CD4-positive, alpha-beta T cell (primary cell): ENCODE measurements at regions of chr19 and their contacts with region 1.

Region 1: GRCh38 chr19:49929611-49930482 is 543 bp upstream of the NUP62 start:
- DNase-seq: peak; percentile 82 to 98 (median 90)
- ATAC-seq: peak; percentile 87
- H3K4me3 ChIP-seq: peak overlapping the region; percentile 89
- H3K4me3 Mint-ChIP-seq: peak overlapping the region; percentile 99
- H3K27ac ChIP-seq: peak overlapping the region; percentile 90 to 93
- H3K27ac Mint-ChIP-seq: peak overlapping the region; percentile 96
- H3K4me1 ChIP-seq: peaks cover 73% of the 10 kb centered on the region
- H3K4me1 Mint-ChIP-seq: peaks cover 66% of the 10 kb centered on the region
- H3K27me3 ChIP-seq: no peaks in the 10 kb centered on the region
- H3K27me3 Mint-ChIP-seq: peaks cover 5% of the 10 kb centered on the region
- CTCF ChIP-seq: no peak

Region 2: GRCh38 chr19:48468775-48469288 is 1461.0 kb before region 1 on chr19:
- CTCF ChIA-PET with region 1: no interaction called
- POLR2A ChIA-PET with region 1: no interaction called
- intact Hi-C with region 1: no loop called
- DNase-seq: peak; percentile 98 to 100 (median 99)
- ATAC-seq: peak; percentile 89
- H3K4me3 ChIP-seq: peak overlapping the region; percentile 96
- H3K4me3 Mint-ChIP-seq: peak overlapping the region; percentile 90
- H3K27ac ChIP-seq: peak overlapping the region; percentile 25 to 79
- H3K27ac Mint-ChIP-seq: peak overlapping the region; percentile 82
- H3K4me1 ChIP-seq: peaks cover 22% of the 10 kb centered on the region
- H3K4me1 Mint-ChIP-seq: peaks cover 21% of the 10 kb centered on the region
- H3K27me3 ChIP-seq: no peaks in the 10 kb centered on the region
- H3K27me3 Mint-ChIP-seq: no peaks in the 10 kb centered on the region
- CTCF ChIP-seq: no peak

Region 3: GRCh38 chr19:49766007-49766937 is 163.6 kb before region 1 on chr19:
- CTCF ChIA-PET with region 1: no interaction called
- POLR2A ChIA-PET with region 1: interaction called, 6 read pairs
- intact Hi-C with region 1: loop called in 1 of 2 experiments (anchors 1 kb)
- DNase-seq: peak; percentile 98 to 100 (median 99)
- ATAC-seq: peak; percentile 86
- H3K4me3 ChIP-seq: peak overlapping the region; percentile 91
- H3K4me3 Mint-ChIP-seq: peak overlapping the region; percentile 94
- H3K27ac ChIP-seq: peak overlapping the region in 1 of 2 donors; percentile 84
- H3K27ac Mint-ChIP-seq: peak overlapping the region; percentile 76
- H3K4me1 ChIP-seq: peaks cover 32% of the 10 kb centered on the region
- H3K4me1 Mint-ChIP-seq: peaks cover 45% of the 10 kb centered on the region
- H3K27me3 ChIP-seq: no peaks in the 10 kb centered on the region
- H3K27me3 Mint-ChIP-seq: no peaks in the 10 kb centered on the region
- CTCF ChIP-seq: no peak

Region 4: GRCh38 chr19:49850473-49851342 is 79.1 kb before region 1 on chr19 and contains the start of gene PTOV1:
- CTCF ChIA-PET with region 1: no interaction called
- POLR2A ChIA-PET with region 1: interaction called, 12 read pairs
- intact Hi-C with region 1: no loop called
- DNase-seq: peak; percentile 77 to 95 (median 84)
- ATAC-seq: peak; percentile 87
- H3K4me3 ChIP-seq: peak within 1 kb of the TSS; percentile 84
- H3K4me3 Mint-ChIP-seq: peak within 1 kb of the TSS; percentile 98
- H3K27ac ChIP-seq: peak within 1 kb of the TSS; percentile 94 to 95
- H3K27ac Mint-ChIP-seq: peak within 1 kb of the TSS; percentile 94
- H3K4me1 ChIP-seq: peaks cover 54% of the 10 kb centered on the region
- H3K4me1 Mint-ChIP-seq: peaks cover 35% of the 10 kb centered on the region
- H3K27me3 ChIP-seq: no peaks in the 10 kb centered on the region
- H3K27me3 Mint-ChIP-seq: no peaks in the 10 kb centered on the region
- CTCF ChIP-seq: no peak
- total RNA-seq, gene PTOV1: 127 to 134 TPM

Region 5: DNA sequence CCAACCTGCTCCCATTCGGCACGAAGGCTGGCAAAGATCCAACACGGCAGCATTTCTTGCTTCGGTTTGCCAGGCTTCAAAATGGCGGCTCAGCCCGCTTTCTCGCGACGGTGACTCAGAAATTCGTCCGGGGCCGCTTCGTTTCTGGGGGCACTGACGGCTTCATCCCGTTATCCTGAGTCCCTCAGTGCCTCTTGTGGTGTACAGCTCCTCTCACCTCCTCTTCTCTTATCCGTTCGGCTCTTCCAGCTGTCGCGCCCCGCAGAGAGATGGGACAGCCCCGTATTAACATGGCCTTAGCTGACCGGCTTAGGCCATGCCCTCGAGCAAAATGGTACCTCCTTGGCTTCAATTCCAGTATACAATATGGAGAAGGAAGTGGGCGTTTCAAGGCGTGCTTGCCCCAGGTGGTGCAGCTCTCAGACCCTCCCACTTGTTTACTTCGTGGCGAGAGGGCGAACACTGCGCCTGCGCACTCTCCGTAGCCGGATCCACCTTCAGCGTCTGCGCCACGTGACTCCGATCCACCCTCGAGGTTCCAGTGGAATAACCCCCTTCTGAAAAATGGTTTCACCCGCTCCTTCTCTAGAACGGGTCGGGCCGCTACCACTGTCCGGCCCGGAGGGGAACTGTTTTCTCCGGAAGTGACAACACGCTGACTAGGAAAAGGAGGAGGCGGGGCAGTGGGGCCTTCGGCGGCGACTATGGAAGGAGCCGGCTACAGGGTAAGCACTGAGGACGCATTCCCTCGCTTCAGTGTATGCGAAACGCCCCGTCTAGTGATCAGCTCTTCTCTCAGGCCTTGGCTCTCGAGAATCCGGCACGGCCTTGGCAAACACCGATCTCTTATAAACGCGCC is 52.6 kb before region 1 on chr19 and contains the starts of genes AKT1S1 and TBC1D17:
- CTCF ChIA-PET with region 1: interaction called, 3 read pairs
- POLR2A ChIA-PET with region 1: interaction called, 41 read pairs
- intact Hi-C with region 1: loop called in 1 of 2 experiments (anchors 5 kb)
- DNase-seq: peak; percentile 95 to 100 (median 98)
- ATAC-seq: peak; percentile 60
- H3K4me3 ChIP-seq: peak within 1 kb of the TSS; percentile 88
- H3K4me3 Mint-ChIP-seq: no peak within 1 kb of the TSS
- H3K27ac ChIP-seq: peak within 1 kb of the TSS; percentile 98 to 100
- H3K27ac Mint-ChIP-seq: no peak within 1 kb of the TSS
- H3K4me1 ChIP-seq: peaks cover 35% of the 10 kb centered on the region
- H3K4me1 Mint-ChIP-seq: peaks cover 18% of the 10 kb centered on the region
- H3K27me3 ChIP-seq: no peaks in the 10 kb centered on the region
- H3K27me3 Mint-ChIP-seq: no peaks in the 10 kb centered on the region
- CTCF ChIP-seq: no peak
- total RNA-seq, gene AKT1S1: 15.1 to 15.8 TPM
- total RNA-seq, gene TBC1D17: 35.5 to 35.8 TPM

Region 6: GRCh38 chr19:49896863-49897621 is 32.8 kb before region 1 on chr19 and contains the start of gene IL4I1:
- CTCF ChIA-PET with region 1: interaction called, 4 read pairs
- POLR2A ChIA-PET with region 1: interaction called, 19 read pairs
- intact Hi-C with region 1: loop called in 1 of 2 experiments (anchors 5 kb)
- DNase-seq: peak; percentile 31 to 94 (median 51)
- ATAC-seq: peak; percentile 71
- H3K4me3 ChIP-seq: peak within 1 kb of the TSS; percentile 48
- H3K4me3 Mint-ChIP-seq: peak within 1 kb of the TSS; percentile 85
- H3K27ac ChIP-seq: peak within 1 kb of the TSS; percentile 80 to 99
- H3K27ac Mint-ChIP-seq: peak within 1 kb of the TSS; percentile 95
- H3K4me1 ChIP-seq: peaks cover 46% of the 10 kb centered on the region
- H3K4me1 Mint-ChIP-seq: peaks cover 37% of the 10 kb centered on the region
- H3K27me3 ChIP-seq: no peaks in the 10 kb centered on the region
- H3K27me3 Mint-ChIP-seq: no peaks in the 10 kb centered on the region
- CTCF ChIP-seq: no peak
- total RNA-seq, gene IL4I1: 4.7 to 5.4 TPM

Region 7: DNA sequence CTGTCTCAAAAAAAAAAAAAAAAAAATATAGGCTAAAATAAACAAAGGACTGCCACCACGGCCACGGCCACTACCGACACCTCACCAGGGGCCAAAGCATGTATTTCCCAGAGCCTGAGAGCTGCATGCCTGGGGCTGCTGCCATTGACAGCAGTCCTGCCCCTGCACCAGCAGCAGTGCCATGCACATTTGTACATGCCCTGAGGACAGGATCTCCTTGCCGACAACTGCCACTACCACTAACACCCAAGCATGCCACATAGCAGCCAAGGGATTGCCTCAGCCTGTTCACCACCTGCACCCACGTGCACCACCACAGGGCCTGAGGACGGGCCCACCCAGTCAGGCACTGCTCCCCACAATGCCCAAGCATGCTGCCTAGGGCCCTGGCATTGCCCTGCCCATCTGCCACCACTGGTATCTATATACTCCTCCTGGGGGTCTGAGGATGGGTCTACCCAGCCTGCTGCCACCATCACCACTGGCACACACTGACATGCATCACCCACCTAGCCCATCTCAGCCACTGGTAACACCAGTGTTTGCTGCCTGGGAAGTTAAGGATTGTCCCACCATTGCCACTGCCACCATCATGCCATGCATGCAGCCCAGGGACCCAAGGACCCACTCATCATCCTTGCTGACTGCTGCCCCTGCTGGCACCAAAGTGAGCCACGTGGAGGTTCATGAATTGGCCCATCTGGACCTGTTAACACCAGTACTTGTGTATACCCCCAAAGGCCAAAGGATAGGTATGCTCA is 10.1 kb after region 1 on chr19:
- CTCF ChIA-PET with region 1: no interaction called
- POLR2A ChIA-PET with region 1: no interaction called
- intact Hi-C with region 1: no loop called
- DNase-seq: peak in 1 of 14 experiments; percentile 34
- ATAC-seq: no peak
- H3K4me3 ChIP-seq: no peak overlapping the region
- H3K4me3 Mint-ChIP-seq: no peak overlapping the region
- H3K27ac ChIP-seq: no peak overlapping the region
- H3K27ac Mint-ChIP-seq: no peak overlapping the region
- H3K4me1 ChIP-seq: peaks cover 8% of the 10 kb centered on the region
- H3K4me1 Mint-ChIP-seq: peaks cover 8% of the 10 kb centered on the region
- H3K27me3 ChIP-seq: peaks cover 0 to 4% of the 10 kb centered on the region in 2 experiments
- H3K27me3 Mint-ChIP-seq: no peaks in the 10 kb centered on the region
- CTCF ChIP-seq: no peak

Region 8: DNA sequence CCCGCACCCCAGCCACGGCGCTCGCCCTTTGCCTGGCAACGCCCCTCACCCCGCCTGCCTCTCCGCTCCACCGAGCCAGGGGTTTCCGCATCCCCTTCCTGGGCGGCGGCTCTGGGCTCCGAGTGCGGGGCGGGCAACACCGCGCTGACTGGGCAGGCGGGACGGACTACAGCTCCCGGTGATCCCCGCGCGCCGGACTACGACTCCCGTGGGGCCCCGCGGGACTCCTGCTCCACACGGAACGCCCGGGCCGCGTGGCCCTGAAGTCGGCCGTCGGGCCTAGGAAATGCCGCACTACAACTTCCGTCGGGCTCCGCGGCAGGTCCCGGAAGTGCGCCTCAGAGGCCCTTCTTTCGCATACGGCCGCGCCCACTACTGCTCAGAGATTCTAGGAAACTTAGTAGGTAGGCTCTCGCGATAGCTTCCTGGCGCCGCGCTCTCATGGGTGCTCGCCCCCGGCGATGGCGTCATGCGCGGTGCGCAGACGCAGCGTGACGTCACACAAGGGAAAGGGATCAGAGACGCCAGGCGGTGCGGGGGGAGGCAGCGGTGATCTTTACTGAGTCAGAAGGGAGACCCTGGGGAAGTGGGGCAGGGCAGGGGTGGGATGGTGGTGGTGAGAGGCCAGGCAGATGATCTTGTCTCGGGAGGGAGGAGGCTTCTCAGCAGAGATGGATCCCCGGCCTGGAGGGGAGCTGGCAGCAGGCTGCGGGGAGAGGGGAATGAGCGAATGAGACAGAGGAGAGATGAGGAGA is 581.4 kb after region 1 on chr19 and contains the start of gene JOSD2:
- CTCF ChIA-PET with region 1: no interaction called
- POLR2A ChIA-PET with region 1: no interaction called
- intact Hi-C with region 1: loop called in 1 of 2 experiments (anchors 5 kb)
- DNase-seq: peak; percentile 94 to 100 (median 96)
- ATAC-seq: peak; percentile 91
- H3K4me3 ChIP-seq: peak within 1 kb of the TSS; percentile 79
- H3K4me3 Mint-ChIP-seq: peak within 1 kb of the TSS; percentile 95
- H3K27ac ChIP-seq: peak within 1 kb of the TSS; percentile 63 to 91
- H3K27ac Mint-ChIP-seq: peak within 1 kb of the TSS; percentile 89
- H3K4me1 ChIP-seq: peaks cover 23% of the 10 kb centered on the region
- H3K4me1 Mint-ChIP-seq: peaks cover 15% of the 10 kb centered on the region
- H3K27me3 ChIP-seq: peaks cover 0 to 4% of the 10 kb centered on the region in 2 experiments
- H3K27me3 Mint-ChIP-seq: peaks cover 6% of the 10 kb centered on the region
- CTCF ChIP-seq: no peak
- total RNA-seq, gene JOSD2: 11.7 to 11.9 TPM